ENCODE measurements at regions of chr12 and their contacts with region 1.

Region 1: GRCh38 chr12:95351748-95352147 is 122.2 kb upstream of the METAP2 start:
- DNase-seq: no peak
- H3K4me3 ChIP-seq: no peak overlapping the region
- H3K27ac ChIP-seq: no peak overlapping the region
- H3K4me1 ChIP-seq: no peaks in the 10 kb centered on the region
- H3K27me3 ChIP-seq: no peaks in the 10 kb centered on the region
- CTCF ChIP-seq: no peak

Region 2: DNA sequence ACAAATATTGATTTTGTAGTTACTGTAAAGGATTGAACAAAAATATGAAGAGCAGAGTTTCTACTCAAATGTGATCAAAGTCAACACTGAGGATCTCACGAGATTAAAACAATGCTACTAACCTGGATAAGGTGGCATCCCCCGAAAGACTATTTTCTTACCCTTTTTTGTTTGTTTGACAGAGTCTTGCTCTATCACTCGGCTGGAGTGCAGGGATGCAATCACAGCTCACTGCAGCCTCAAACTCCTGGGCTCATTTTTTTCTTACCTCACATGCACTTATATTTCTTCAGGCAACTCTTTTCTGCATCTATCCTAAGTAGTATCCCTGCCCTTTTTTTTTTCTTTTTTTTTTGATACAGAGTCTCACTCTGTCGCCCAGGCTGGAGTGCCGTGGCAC is 24.9 kb before region 1 on chr12:
- CTCF ChIA-PET with region 1: interaction called, 10 read pairs
- POLR2A ChIA-PET with region 1: no interaction called
- intact Hi-C with region 1: no loop called
- DNase-seq: no peak
- H3K4me3 ChIP-seq: no peak overlapping the region
- H3K27ac ChIP-seq: peak overlapping the region; percentile 44
- H3K4me1 ChIP-seq: peaks cover 25% of the 10 kb centered on the region
- H3K27me3 ChIP-seq: no peaks in the 10 kb centered on the region
- CTCF ChIP-seq: no peak

Region 3: GRCh38 chr12:95480230-95480629 is 128.5 kb after region 1 on chr12:
- CTCF ChIA-PET with region 1: no interaction called
- POLR2A ChIA-PET with region 1: no interaction called
- intact Hi-C with region 1: no loop called
- DNase-seq: no peak
- H3K4me3 ChIP-seq: no peak overlapping the region
- H3K27ac ChIP-seq: no peak overlapping the region
- H3K4me1 ChIP-seq: peaks cover 8% of the 10 kb centered on the region
- H3K27me3 ChIP-seq: no peaks in the 10 kb centered on the region
- CTCF ChIP-seq: no peak